ENCODE measurements at regions of chr12 and their contacts with region 1.

Region 1: DNA sequence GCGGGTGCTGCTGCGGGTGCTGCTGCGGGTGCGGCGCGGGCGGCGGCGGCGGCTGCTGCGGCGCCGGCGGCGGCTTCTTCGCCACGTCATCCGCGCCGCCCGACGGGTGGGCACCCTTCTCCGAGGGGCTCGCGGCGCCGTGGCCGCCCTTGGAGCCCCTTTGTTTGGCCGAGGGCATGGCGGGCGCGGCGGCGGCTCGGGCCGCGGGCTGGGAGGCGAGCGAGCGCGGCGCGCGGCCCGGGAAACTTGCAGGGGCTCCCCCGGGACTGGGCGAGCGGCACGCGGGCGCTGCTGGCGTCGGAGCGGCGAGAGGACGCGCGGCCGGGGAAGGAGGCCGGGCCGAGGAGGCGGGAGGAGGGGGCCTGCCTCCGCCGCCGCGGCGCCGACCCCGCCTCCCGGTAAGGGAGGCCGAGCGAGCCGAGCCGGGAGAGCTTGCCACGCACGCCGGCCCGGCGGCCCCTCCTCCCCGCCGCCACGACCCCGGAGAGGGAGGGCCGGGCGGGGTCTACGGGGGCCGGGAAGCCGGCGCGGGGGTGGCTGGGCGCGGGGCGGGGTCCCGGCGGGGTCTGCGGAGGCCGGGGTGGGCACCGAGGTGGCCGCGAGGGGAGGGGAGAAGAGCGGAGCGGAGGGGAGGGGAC is at the start of gene CKAP4:
- DNase-seq: peak; percentile 72
- H3K4me3 Mint-ChIP-seq: peak within 1 kb of the TSS; percentile 76
- H3K27ac Mint-ChIP-seq: peak within 1 kb of the TSS; percentile 23
- H3K4me1 Mint-ChIP-seq: peaks cover 23% of the 10 kb centered on the region
- H3K27me3 Mint-ChIP-seq: no peaks in the 10 kb centered on the region
- CTCF ChIP-seq: no peak
- total RNA-seq, gene CKAP4: 101 and 118 TPM in 2 replicates

Region 2: GRCh38 chr12:106288494-106289195 is 40.9 kb after region 1 on chr12:
- CTCF ChIA-PET with region 1: interaction called, 15 read pairs
- POLR2A ChIA-PET with region 1: interaction called, 4 read pairs
- intact Hi-C with region 1: loop called (anchors 1 kb)
- DNase-seq: peak; percentile 94
- H3K4me3 Mint-ChIP-seq: peak overlapping the region; percentile 21
- H3K27ac Mint-ChIP-seq: peak overlapping the region; percentile 95
- H3K4me1 Mint-ChIP-seq: peaks cover 22% of the 10 kb centered on the region
- H3K27me3 Mint-ChIP-seq: no peaks in the 10 kb centered on the region
- CTCF ChIP-seq: no peak

Region 3: GRCh38 chr12:106527356-106527755 is 279.6 kb after region 1 on chr12:
- CTCF ChIA-PET with region 1: no interaction called
- POLR2A ChIA-PET with region 1: no interaction called
- intact Hi-C with region 1: no loop called
- DNase-seq: no peak
- H3K4me3 Mint-ChIP-seq: no peak overlapping the region
- H3K27ac Mint-ChIP-seq: no peak overlapping the region
- H3K4me1 Mint-ChIP-seq: no peaks in the 10 kb centered on the region
- H3K27me3 Mint-ChIP-seq: peaks cover 18% of the 10 kb centered on the region
- CTCF ChIP-seq: no peak